ENCODE measurements at regions of chr22 and their contacts with region 1.

Region 1: GRCh38 chr22:16936625-16937024 is 71.4 kb downstream of the GAB4 start:
- DNase-seq: no peak
- ATAC-seq: no peak
- H3K4me3 ChIP-seq: no peak overlapping the region
- H3K27ac ChIP-seq: no peak overlapping the region
- H3K4me1 ChIP-seq: no peaks in the 10 kb centered on the region
- H3K27me3 ChIP-seq: no peaks in the 10 kb centered on the region; a peak in 1 of 4 replicates
- CTCF ChIP-seq: no peak
- EP300 ChIP-seq: no peak
- POLR2A ChIP-seq: no peak
- RAD21 ChIP-seq: no peak

Region 2: GRCh38 chr22:16970446-16970845 is 33.8 kb after region 1 on chr22:
- CTCF ChIA-PET with region 1: no interaction called
- POLR2A ChIA-PET with region 1: no interaction called
- RAD21 ChIA-PET with region 1: no interaction called
- SMC1A ChIA-PET with region 1: no interaction called
- in situ Hi-C with region 1: loop called (anchors 5 kb)
- intact Hi-C with region 1: no loop called
- DNase-seq: no peak
- ATAC-seq: no peak
- H3K4me3 ChIP-seq: no peak overlapping the region
- H3K27ac ChIP-seq: no peak overlapping the region
- H3K4me1 ChIP-seq: no peaks in the 10 kb centered on the region
- H3K27me3 ChIP-seq: no peaks in the 10 kb centered on the region
- CTCF ChIP-seq: no peak
- EP300 ChIP-seq: no peak
- POLR2A ChIP-seq: no peak
- RAD21 ChIP-seq: no peak

Region 3: DNA sequence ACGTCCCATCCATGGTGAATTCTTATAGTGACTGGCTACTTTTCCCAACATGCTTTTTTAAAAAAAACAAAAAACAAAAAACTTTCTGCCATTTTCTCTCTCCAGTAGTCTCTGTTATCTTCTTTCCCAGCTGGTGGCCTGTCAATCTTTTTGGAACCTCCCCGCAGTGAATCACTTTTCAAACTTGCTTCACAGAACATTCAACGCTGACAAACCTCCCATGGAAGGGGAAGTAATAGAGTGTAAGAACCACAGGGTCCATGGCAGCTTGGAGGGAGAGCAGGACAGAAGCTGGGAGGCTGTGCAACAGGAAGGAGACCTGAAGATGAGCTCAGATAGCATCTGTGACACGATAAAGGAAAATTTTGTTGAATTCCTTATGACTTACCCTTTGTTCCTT is 422.9 kb after region 1 on chr22:
- CTCF ChIA-PET with region 1: no interaction called
- POLR2A ChIA-PET with region 1: no interaction called
- RAD21 ChIA-PET with region 1: no interaction called
- SMC1A ChIA-PET with region 1: no interaction called
- in situ Hi-C with region 1: no loop called
- intact Hi-C with region 1: no loop called
- DNase-seq: no peak
- ATAC-seq: no peak
- H3K4me3 ChIP-seq: no peak overlapping the region
- H3K27ac ChIP-seq: no peak overlapping the region
- H3K4me1 ChIP-seq: no peaks in the 10 kb centered on the region
- H3K27me3 ChIP-seq: no peaks in the 10 kb centered on the region
- CTCF ChIP-seq: no peak
- EP300 ChIP-seq: no peak
- POLR2A ChIP-seq: no peak
- RAD21 ChIP-seq: no peak

Measured in GM12878 (cell line).